ENCODE measurements at regions of chr5 and their contacts with region 1.

Region 1: DNA sequence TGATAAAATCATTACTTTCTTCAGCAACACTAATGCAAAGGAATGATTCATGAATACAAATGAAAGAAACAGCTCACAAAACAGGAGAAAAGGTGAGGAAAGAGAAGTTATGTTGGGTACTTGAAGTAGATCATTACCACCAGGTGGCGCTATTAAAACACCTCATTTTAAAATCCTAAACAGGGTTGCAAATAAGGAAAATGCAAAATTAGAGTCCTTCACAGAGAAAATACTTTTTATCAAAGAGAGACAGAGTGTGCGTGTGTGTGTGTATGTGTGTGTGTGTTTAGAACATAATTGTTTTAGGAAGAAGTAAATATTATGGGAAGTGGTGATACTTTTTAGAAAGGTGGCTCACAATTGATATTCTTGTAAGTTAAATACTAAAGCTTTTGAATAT is 49.5 kb upstream of the CD180 start:
- DNase-seq: no peak
- H3K4me3 Mint-ChIP-seq: no peak overlapping the region
- H3K27ac Mint-ChIP-seq: no peak overlapping the region
- H3K4me1 Mint-ChIP-seq: peaks cover 17% of the 10 kb centered on the region
- H3K27me3 Mint-ChIP-seq: no peaks in the 10 kb centered on the region

Region 2: DNA sequence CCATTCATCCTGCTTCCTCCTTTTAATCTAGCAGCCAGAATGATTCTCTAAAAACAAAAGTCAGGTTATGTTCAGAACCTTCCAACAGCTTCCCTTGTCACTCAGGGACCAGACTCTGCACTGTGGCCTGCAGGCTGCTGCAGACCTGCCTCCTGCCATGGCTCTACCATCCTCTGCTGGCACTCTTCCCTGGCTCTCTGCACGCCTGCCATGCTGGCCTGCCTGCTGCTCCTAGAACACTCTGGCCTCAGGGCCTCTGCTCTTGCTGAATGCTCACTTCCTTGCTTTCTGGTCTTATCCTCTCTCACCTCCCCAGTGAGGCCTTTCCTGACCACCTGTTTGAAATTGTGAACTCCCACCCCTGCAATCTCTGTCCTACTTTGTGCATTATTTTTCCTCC is 198.9 kb before region 1 on chr5:
- CTCF ChIA-PET with region 1: no interaction called
- DNase-seq: no peak
- H3K4me3 Mint-ChIP-seq: no peak overlapping the region
- H3K27ac Mint-ChIP-seq: no peak overlapping the region
- H3K4me1 Mint-ChIP-seq: peaks cover 8% of the 10 kb centered on the region
- H3K27me3 Mint-ChIP-seq: no peaks in the 10 kb centered on the region

Region 3: DNA sequence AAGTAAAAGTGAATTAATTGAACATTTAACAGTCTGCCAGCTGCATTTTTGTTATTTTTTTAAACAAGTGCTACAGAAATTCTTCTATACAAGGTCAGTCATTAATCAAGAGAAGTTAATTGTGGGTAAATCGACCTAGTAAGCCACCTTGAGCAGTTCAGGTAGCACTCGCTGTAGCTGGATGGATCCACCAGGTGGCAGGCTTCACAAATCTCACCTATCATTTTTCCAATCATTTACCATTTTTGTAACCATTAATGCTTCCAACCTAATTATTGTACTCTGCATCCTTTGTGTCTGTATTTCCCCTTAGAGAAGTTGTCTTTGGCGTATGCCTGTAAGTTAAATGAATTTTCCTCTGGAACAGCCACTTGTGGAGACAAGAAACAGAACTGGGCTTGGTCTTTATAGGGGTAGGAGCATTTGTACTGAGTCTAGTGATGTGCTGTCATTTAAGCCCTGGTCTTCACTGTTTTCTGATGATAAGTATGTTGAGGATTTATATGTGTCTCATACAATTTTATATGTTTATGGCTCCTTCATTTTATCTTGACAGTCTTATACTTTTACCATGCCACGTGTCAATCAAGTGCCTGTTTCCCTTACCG is 89.0 kb before region 1 on chr5:
- CTCF ChIA-PET with region 1: interaction called, 17 read pairs
- DNase-seq: peak; percentile 64
- H3K4me3 Mint-ChIP-seq: no peak overlapping the region
- H3K27ac Mint-ChIP-seq: peak overlapping the region; percentile 34
- H3K4me1 Mint-ChIP-seq: peaks cover 57% of the 10 kb centered on the region
- H3K27me3 Mint-ChIP-seq: no peaks in the 10 kb centered on the region

Region 4: GRCh38 chr5:68252673-68253623 is 1006.8 kb after region 1 on chr5:
- CTCF ChIA-PET with region 1: interaction called, 16 read pairs
- DNase-seq: peak; percentile 57
- H3K4me3 Mint-ChIP-seq: no peak overlapping the region
- H3K27ac Mint-ChIP-seq: no peak overlapping the region
- H3K4me1 Mint-ChIP-seq: peaks cover 89% of the 10 kb centered on the region
- H3K27me3 Mint-ChIP-seq: no peaks in the 10 kb centered on the region